Activated naive CD4-positive, alpha-beta T cell treated with anti-CD3 and anti-CD28 coated beads for 36 hours (primary cell): ENCODE measurements at regions of chr1 and their contacts with region 1.

Region 1: DNA sequence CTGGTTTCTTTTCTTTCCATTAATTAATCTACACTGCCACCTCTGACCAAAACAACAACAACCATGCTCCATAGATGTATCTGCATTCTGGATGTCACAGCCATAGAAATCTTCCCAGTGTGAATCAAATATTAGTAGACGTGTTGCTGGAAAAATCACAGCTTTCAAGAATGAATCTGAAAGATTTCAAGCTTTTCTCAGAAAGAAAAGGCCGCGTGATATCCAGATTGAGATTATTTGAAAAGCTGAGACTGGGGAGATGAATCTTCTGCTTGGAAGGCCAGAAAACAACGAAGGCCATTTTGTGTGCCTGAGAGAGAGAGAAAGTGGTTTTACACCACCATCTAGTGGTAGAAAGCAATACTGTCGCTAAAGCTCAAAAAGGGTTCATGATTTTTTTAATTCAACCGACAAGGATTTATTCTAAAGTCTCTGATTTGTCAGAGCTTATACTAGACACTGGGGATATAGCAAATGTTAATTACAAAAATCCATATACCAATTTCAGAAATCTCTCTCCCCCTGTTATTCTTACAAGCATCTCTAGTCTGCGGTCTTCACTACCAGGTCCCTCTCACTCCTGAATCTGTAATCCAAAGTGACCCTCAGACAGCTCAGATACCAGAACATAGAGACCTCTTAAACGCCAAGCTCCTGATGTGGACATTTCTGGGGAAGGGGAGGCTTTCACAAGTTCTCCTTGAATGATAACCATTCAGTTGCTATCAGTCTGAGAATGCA is 87.5 kb upstream of the SGIP1 start:
- DNase-seq: peak; percentile 45
- H3K4me3 Mint-ChIP-seq: peak overlapping the region; percentile 74
- H3K27ac Mint-ChIP-seq: peak overlapping the region; percentile 92
- H3K4me1 Mint-ChIP-seq: peaks cover 26% of the 10 kb centered on the region
- H3K27me3 Mint-ChIP-seq: peaks cover 5% of the 10 kb centered on the region

Region 2: DNA sequence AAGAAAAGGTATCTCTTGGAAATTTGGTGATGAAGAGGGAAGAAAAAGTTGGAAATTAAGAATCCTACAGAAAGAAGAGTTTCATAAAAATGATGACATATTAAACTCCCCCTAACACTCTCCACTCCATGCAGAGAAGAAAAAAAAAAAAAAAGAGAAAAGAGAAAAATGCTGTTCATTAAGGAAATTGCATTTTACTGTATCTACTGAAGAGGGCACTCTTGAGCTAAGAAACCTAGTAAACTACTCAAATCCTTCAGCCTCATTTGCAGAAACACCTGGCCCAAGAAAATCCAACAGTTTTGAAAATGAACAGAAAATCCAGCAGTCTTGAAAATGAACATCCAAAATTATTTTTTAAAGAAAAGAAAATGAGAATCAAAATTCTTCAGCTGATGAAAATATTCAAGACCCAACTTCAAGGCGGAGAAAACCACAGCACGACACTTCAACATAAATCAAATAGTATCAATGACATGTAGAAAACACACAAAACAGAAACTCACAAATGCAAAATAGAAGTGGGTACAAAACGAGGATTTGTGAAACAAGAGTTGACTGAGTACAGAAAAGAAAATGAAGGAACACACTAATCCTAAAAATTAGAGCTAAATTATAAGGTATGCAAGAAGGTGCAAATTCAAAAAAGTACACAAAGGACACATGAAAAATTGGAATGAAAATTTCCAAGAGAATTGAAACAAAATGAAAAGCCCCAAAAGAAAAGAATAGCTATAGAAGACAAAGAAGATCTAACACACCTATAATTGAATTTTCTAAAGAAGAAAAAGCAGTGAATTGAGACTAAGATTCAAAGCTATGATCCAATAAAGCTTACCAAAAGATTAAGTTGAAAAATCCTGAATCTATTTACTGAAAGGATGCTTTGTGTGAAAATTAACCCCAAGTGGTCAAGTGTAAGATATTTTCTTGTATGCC is 1210.3 kb before region 1 on chr1:
- CTCF ChIA-PET with region 1: interaction called, 3 read pairs
- intact Hi-C with region 1: loop called (anchors 5 kb)
- DNase-seq: no peak
- H3K4me3 Mint-ChIP-seq: no peak overlapping the region
- H3K27ac Mint-ChIP-seq: no peak overlapping the region
- H3K4me1 Mint-ChIP-seq: peaks cover 7% of the 10 kb centered on the region
- H3K27me3 Mint-ChIP-seq: peaks cover 3% of the 10 kb centered on the region

Region 3: GRCh38 chr1:65717815-65718454 is 728.5 kb before region 1 on chr1:
- CTCF ChIA-PET with region 1: no interaction called
- intact Hi-C with region 1: loop called (anchors 1 kb)
- DNase-seq: peak; percentile 43
- H3K4me3 Mint-ChIP-seq: no peak overlapping the region
- H3K27ac Mint-ChIP-seq: no peak overlapping the region
- H3K4me1 Mint-ChIP-seq: no peaks in the 10 kb centered on the region
- H3K27me3 Mint-ChIP-seq: peaks cover 5% of the 10 kb centered on the region

Region 4: DNA sequence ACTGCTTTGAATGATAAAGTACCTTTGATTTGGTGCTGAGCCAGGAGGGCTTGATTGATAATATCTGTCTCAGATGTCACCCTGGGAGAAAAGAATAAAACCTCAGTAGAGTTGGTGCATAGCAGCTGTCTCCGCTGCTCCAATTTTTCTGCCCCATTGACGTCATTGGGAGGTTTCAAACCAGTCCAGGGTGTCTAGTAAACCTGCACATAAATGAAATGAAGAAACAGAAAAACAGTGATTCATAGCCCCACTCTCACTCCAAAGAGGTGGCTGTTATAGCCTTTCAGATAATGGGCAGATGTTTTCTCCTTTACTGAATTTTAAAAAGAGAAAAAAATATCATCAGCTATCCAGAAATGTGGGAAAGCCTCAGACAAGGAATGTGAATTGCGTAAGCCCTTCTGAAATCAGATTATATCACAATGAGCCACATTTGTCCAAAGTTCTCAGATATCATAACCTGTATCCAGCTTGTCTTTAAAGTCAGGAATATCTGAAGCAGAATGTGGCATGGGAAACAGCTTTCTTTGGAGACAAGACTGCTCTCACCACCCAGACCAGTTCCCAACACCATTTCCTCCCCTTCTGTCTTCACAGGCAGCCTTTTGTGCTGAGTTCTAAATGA is 263.8 kb before region 1 on chr1:
- CTCF ChIA-PET with region 1: interaction called, 3 read pairs
- intact Hi-C with region 1: loop called (anchors 2 kb)
- DNase-seq: peak; percentile 79
- H3K4me3 Mint-ChIP-seq: no peak overlapping the region
- H3K27ac Mint-ChIP-seq: peak overlapping the region; percentile 13
- H3K4me1 Mint-ChIP-seq: peaks cover 33% of the 10 kb centered on the region
- H3K27me3 Mint-ChIP-seq: no peaks in the 10 kb centered on the region

Region 5: DNA sequence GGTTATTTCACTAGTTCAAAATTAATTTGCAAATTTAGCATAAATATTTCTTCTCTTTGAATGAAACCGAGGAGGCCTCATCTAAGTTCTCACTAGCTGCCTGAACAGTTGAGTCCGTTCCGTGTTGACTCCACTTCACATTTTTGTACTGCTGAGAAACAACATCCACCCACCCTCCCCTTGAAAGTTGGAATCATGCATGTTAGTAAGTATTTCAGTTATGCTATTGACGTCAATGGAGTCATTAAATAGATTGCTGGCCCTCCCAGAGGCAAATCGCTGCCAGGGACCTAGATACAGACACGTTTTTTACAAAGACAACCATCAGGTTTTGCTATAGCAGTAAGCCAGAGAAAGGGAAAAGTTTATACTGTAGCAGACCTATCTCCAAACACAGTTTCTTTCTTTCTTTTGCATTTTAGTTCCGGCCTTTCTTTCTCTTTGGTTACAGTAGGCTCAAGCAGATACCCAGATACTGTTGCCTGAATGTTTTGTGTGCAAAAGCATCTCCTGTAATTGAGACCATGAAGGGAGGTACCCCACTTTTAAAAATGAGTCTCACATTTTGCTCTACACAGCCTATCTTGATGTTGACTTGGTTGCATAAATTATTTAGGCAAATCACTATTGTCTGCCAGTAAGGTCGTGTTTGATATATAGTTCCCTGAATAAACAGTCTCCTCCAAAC is 175.1 kb before region 1 on chr1:
- CTCF ChIA-PET with region 1: interaction called, 15 read pairs
- intact Hi-C with region 1: no loop called
- DNase-seq: peak; percentile 84
- H3K4me3 Mint-ChIP-seq: peak overlapping the region; percentile 54
- H3K27ac Mint-ChIP-seq: peak overlapping the region; percentile 90
- H3K4me1 Mint-ChIP-seq: peaks cover 74% of the 10 kb centered on the region
- H3K27me3 Mint-ChIP-seq: no peaks in the 10 kb centered on the region

Region 6: DNA sequence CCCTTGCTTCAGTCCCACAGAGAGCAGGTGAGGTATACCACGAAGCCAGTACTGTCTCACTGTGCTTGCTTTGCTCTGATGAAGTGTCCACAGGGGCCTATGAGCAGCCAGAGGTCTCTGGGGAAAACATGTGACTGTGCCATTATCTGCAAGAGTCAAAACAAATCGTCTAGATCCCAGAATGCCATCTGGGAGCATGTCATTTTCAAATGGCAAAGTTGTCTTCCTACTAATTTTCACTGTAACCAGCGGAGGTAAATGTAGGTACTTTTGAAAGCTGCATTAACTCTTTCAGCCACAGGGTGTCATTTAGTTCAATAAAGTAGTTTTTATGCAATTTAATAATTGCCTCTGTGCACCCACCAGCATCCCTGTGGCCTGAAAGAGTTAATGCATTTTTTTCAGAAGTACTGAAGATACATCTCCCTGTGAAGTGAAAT is 86.1 kb before region 1 on chr1:
- CTCF ChIA-PET with region 1: interaction called, 61 read pairs
- intact Hi-C with region 1: loop called (anchors 1 kb)
- DNase-seq: no peak
- H3K4me3 Mint-ChIP-seq: no peak overlapping the region
- H3K27ac Mint-ChIP-seq: no peak overlapping the region
- H3K4me1 Mint-ChIP-seq: peaks cover 73% of the 10 kb centered on the region
- H3K27me3 Mint-ChIP-seq: no peaks in the 10 kb centered on the region

Region 7: GRCh38 chr1:66725885-66726665 is 279.6 kb after region 1 on chr1:
- CTCF ChIA-PET with region 1: interaction called, 5 read pairs
- intact Hi-C with region 1: loop called (anchors 2 kb)
- DNase-seq: peak; percentile 78
- H3K4me3 Mint-ChIP-seq: no peak overlapping the region
- H3K27ac Mint-ChIP-seq: no peak overlapping the region
- H3K4me1 Mint-ChIP-seq: peaks cover 14% of the 10 kb centered on the region
- H3K27me3 Mint-ChIP-seq: peaks cover 4% of the 10 kb centered on the region